ENCODE measurements at regions of chr12 and their contacts with region 1.

Region 1: GRCh38 chr12:96516472-96517430 is 27.4 kb downstream of the CFAP54 start:
- DNase-seq: peak; percentile 56
- H3K4me3 ChIP-seq: no peak overlapping the region
- H3K27ac ChIP-seq: no peak overlapping the region
- H3K4me1 ChIP-seq: no peaks in the 10 kb centered on the region
- H3K27me3 ChIP-seq: no peaks in the 10 kb centered on the region
- CTCF ChIP-seq: peak; percentile 51 to 58

Region 2: GRCh38 chr12:95918194-95918993 is 598.4 kb before region 1 on chr12:
- CTCF ChIA-PET with region 1: no interaction called
- dilution Hi-C with region 1: no loop called
- in situ Hi-C with region 1: no loop called
- intact Hi-C with region 1: loop called (anchors 5 kb)
- DNase-seq: peak; percentile 57
- H3K4me3 ChIP-seq: no peak overlapping the region
- H3K27ac ChIP-seq: no peak overlapping the region
- H3K4me1 ChIP-seq: no peaks in the 10 kb centered on the region
- H3K27me3 ChIP-seq: no peaks in the 10 kb centered on the region
- CTCF ChIP-seq: peak; percentile 92

Region 3: GRCh38 chr12:96061864-96062453 is 454.8 kb before region 1 on chr12:
- CTCF ChIA-PET with region 1: no interaction called
- dilution Hi-C with region 1: loop called (anchors 25 kb)
- in situ Hi-C with region 1: loop called (anchors 10 to 25 kb)
- intact Hi-C with region 1: loop called (anchors 1 kb)
- DNase-seq: peak; percentile 72
- H3K4me3 ChIP-seq: no peak overlapping the region
- H3K27ac ChIP-seq: no peak overlapping the region
- H3K4me1 ChIP-seq: no peaks in the 10 kb centered on the region
- H3K27me3 ChIP-seq: no peaks in the 10 kb centered on the region
- CTCF ChIP-seq: peak; percentile 73 to 84

Region 4: GRCh38 chr12:96237465-96238077 is 279.2 kb before region 1 on chr12:
- CTCF ChIA-PET with region 1: no interaction called
- dilution Hi-C with region 1: loop called (anchors 25 kb)
- in situ Hi-C with region 1: no loop called
- intact Hi-C with region 1: no loop called
- DNase-seq: peak; percentile 94
- H3K4me3 ChIP-seq: no peak overlapping the region
- H3K27ac ChIP-seq: peak overlapping the region; percentile 84
- H3K4me1 ChIP-seq: peaks cover 47% of the 10 kb centered on the region
- H3K27me3 ChIP-seq: no peaks in the 10 kb centered on the region
- CTCF ChIP-seq: no peak

Region 5: GRCh38 chr12:96375841-96376604 is 140.7 kb before region 1 on chr12:
- CTCF ChIA-PET with region 1: no interaction called
- dilution Hi-C with region 1: no loop called
- in situ Hi-C with region 1: no loop called
- intact Hi-C with region 1: no loop called
- DNase-seq: no peak
- H3K4me3 ChIP-seq: no peak overlapping the region
- H3K27ac ChIP-seq: no peak overlapping the region
- H3K4me1 ChIP-seq: no peaks in the 10 kb centered on the region
- H3K27me3 ChIP-seq: no peaks in the 10 kb centered on the region
- CTCF ChIP-seq: no peak

Region 6: GRCh38 chr12:96399919-96400797 is 116.6 kb before region 1 on chr12 and contains the start of gene CDK17:
- CTCF ChIA-PET with region 1: no interaction called
- dilution Hi-C with region 1: no loop called
- in situ Hi-C with region 1: no loop called
- intact Hi-C with region 1: loop called (anchors 1 kb)
- DNase-seq: peak; percentile 80
- H3K4me3 ChIP-seq: peak within 1 kb of the TSS; percentile 66 to 83 (median 74)
- H3K27ac ChIP-seq: peak within 1 kb of the TSS; percentile 88
- H3K4me1 ChIP-seq: peaks cover 9% of the 10 kb centered on the region
- H3K27me3 ChIP-seq: no peaks in the 10 kb centered on the region
- CTCF ChIP-seq: peak in 1 of 2 donors; percentile 44
- total RNA-seq, gene CDK17: 42.5 to 64.2 TPM